ENCODE measurements at regions of chr20 and their contacts with region 1.

Region 1: DNA sequence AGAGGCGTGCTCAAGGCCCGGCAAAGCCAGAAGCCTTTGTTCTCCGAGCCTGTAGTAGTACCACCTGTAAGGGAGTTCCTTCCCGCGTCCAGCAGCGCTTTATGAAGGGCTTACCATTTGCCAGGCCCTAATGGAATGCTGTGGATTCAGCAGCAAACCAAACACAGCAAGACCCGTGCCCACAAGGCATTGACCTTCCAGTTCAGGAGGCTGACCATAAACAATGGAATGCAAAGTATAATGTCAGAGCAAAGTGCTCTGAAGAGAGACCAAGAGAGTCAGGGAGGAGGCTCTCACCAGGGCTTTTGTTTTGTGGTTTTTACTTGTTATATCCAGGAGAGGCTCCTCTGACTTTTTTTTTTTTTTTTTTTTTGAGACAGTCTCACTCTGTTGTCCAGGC is 209.8 kb downstream of the ZMYND8 start:
- DNase-seq: no peak
- ATAC-seq: no peak
- H3K4me3 ChIP-seq: no peak overlapping the region
- H3K27ac ChIP-seq: no peak overlapping the region
- H3K4me1 ChIP-seq: no peaks in the 10 kb centered on the region
- H3K27me3 ChIP-seq: no peaks in the 10 kb centered on the region
- CTCF ChIP-seq: no peak

Region 2: GRCh38 chr20:46757754-46758678 is 388.7 kb before region 1 on chr20:
- intact Hi-C with region 1: loop called in 1 of 2 experiments (anchors 5 kb)
- DNase-seq: peak; percentile 35 to 58
- ATAC-seq: no peak
- H3K4me3 ChIP-seq: no peak overlapping the region
- H3K27ac ChIP-seq: no peak overlapping the region
- H3K4me1 ChIP-seq: no peaks in the 10 kb centered on the region
- H3K27me3 ChIP-seq: peaks cover 0 to 5% (median 0%) of the 10 kb centered on the region in 3 donors
- CTCF ChIP-seq: peak; percentile 64

Measured in psoas muscle (tissue), 8 donors.